ENCODE measurements at regions of chr20 and their contacts with region 1.

Region 1: GRCh38 chr20:13105864-13106457 is 97.2 kb downstream of the SPTLC3 start:
- DNase-seq: peak in 1 of 3 donors; percentile 15
- H3K4me3 ChIP-seq: no peak overlapping the region
- H3K4me3 Mint-ChIP-seq: no peak overlapping the region
- H3K27ac ChIP-seq: no peak overlapping the region
- H3K27ac Mint-ChIP-seq: no peak overlapping the region
- H3K4me1 ChIP-seq: no peaks in the 10 kb centered on the region
- H3K4me1 Mint-ChIP-seq: no peaks in the 10 kb centered on the region
- H3K27me3 ChIP-seq: no peaks in the 10 kb centered on the region
- H3K27me3 Mint-ChIP-seq: peaks cover 0 to 3% (median 0%) of the 10 kb centered on the region in 3 donors
- CTCF ChIP-seq: peak; percentile 54

Region 2: GRCh38 chr20:11676630-11677284 is 1429.2 kb before region 1 on chr20:
- intact Hi-C with region 1: loop called in 1 of 2 experiments (anchors 10 kb)
- DNase-seq: peak in 1 of 3 donors; percentile 7
- H3K4me3 ChIP-seq: no peak overlapping the region
- H3K4me3 Mint-ChIP-seq: no peak overlapping the region
- H3K27ac ChIP-seq: no peak overlapping the region
- H3K27ac Mint-ChIP-seq: peak overlapping the region in 1 of 7 donors; percentile 54
- H3K4me1 ChIP-seq: no peaks in the 10 kb centered on the region
- H3K4me1 Mint-ChIP-seq: no peaks in the 10 kb centered on the region
- H3K27me3 ChIP-seq: no peaks in the 10 kb centered on the region
- H3K27me3 Mint-ChIP-seq: no peaks in the 10 kb centered on the region
- CTCF ChIP-seq: peak; percentile 62

Region 3: DNA sequence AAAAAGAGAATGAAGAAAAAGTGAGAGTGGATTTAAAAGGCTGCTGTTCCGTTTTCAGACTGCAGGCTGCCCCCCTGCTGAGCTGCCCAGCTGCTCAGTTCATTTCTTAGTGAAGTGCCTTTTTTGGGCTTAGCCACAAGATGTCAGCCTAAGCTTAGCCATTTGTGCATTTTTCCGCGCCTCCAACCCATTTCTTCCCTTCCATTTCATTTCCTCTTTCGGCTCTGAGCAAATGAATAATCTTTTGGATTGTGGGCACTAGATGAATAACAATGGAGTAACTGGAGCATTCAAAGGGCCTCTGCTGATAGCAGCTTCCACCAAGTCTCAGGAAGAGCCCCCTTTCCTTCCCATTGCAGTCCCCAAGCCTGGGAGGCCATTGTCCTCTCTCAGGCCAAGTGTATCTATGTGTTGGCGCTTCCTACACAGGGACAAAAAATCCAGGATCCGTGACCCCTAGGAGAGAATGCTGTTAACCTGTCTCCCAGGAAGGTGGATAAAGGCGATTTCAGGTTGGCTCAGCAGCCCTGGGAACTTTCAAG is 180.7 kb before region 1 on chr20:
- intact Hi-C with region 1: loop called in 1 of 2 experiments (anchors 10 kb)
- DNase-seq: peak; percentile 14 to 36 (median 16)
- H3K4me3 ChIP-seq: no peak overlapping the region
- H3K4me3 Mint-ChIP-seq: no peak overlapping the region
- H3K27ac ChIP-seq: no peak overlapping the region
- H3K27ac Mint-ChIP-seq: no peak overlapping the region
- H3K4me1 ChIP-seq: no peaks in the 10 kb centered on the region
- H3K4me1 Mint-ChIP-seq: peaks cover 10% of the 10 kb centered on the region
- H3K27me3 ChIP-seq: no peaks in the 10 kb centered on the region
- H3K27me3 Mint-ChIP-seq: peaks cover 0 to 3% (median 0%) of the 10 kb centered on the region in 3 donors
- CTCF ChIP-seq: peak; percentile 49

Region 4: GRCh38 chr20:12989586-12990115 is 116.3 kb before region 1 on chr20:
- intact Hi-C with region 1: no loop called
- DNase-seq: no peak
- H3K4me3 ChIP-seq: no peak overlapping the region
- H3K4me3 Mint-ChIP-seq: no peak overlapping the region
- H3K27ac ChIP-seq: no peak overlapping the region
- H3K27ac Mint-ChIP-seq: no peak overlapping the region
- H3K4me1 ChIP-seq: no peaks in the 10 kb centered on the region
- H3K4me1 Mint-ChIP-seq: no peaks in the 10 kb centered on the region
- H3K27me3 ChIP-seq: no peaks in the 10 kb centered on the region
- H3K27me3 Mint-ChIP-seq: peaks cover 0 to 2% (median 1%) of the 10 kb centered on the region in 3 donors
- CTCF ChIP-seq: no peak

Measured in CD14-positive monocyte (primary cell).